Mammary epithelial cell (primary cell): ENCODE measurements at regions of chr5 and their contacts with region 1.

Region 1: GRCh38 chr5:75519761-75520160 is 8.1 kb downstream of the POLK start:
- DNase-seq: no peak
- H3K4me3 ChIP-seq: no peak overlapping the region
- H3K27ac ChIP-seq: no peak overlapping the region
- H3K4me1 ChIP-seq: peaks cover 13% of the 10 kb centered on the region
- H3K27me3 ChIP-seq: no peaks in the 10 kb centered on the region
- CTCF ChIP-seq: no peak

Region 2: DNA sequence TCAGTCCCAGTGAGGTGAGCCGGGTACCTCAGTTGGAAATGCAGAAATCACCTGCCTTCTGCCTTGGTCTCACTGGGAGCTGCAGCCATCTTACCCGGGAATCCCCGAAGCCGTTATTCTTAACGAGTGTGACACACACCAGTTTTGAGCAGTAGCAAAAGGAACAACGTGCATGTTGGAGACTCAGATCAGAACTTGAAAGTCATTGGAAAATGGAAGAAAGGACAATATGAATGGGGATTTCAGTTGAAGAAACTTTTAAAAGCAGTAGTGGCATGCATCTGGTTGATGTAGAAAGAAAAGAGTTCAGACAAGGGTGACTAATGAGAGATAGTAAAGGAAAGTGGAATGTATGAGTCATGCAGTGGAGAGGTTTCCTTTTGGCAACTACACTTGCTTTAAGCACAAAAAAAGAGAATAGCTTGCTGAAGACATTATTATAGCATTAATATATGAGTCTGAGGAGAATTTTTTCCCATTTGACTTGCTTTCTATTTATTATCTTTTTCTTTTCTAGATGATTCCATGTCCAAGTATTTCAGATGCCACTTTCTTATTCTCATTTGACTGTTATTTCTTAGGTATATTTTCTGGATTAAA is 47.0 kb after region 1 on chr5:
- CTCF ChIA-PET with region 1: no interaction called
- dilution Hi-C with region 1: loop called (anchors 5 kb)
- in situ Hi-C with region 1: no loop called
- intact Hi-C with region 1: no loop called
- DNase-seq: peak; percentile 82
- H3K4me3 ChIP-seq: peak overlapping the region in 2 of 3 experiments; percentile 4 to 23
- H3K27ac ChIP-seq: peak overlapping the region; percentile 24
- H3K4me1 ChIP-seq: peaks cover 26% of the 10 kb centered on the region
- H3K27me3 ChIP-seq: no peaks in the 10 kb centered on the region
- CTCF ChIP-seq: no peak